ENCODE measurements at regions of chr2 and their contacts with region 1.

Region 1: GRCh38 chr2:148989882-148990493 is 48.5 kb upstream of the LYPD6B start:
- DNase-seq: no peak
- ATAC-seq: peak; percentile 88
- H3K4me3 ChIP-seq: no peak overlapping the region
- H3K27ac ChIP-seq: no peak overlapping the region
- H3K4me1 ChIP-seq: no peaks in the 10 kb centered on the region
- H3K27me3 ChIP-seq: no peaks in the 10 kb centered on the region

Region 2: GRCh38 chr2:147937744-147938349 is 1052.1 kb before region 1 on chr2:
- intact Hi-C with region 1: loop called (anchors 1 to 5 kb)
- DNase-seq: no peak
- ATAC-seq: no peak
- H3K4me3 ChIP-seq: no peak overlapping the region
- H3K27ac ChIP-seq: no peak overlapping the region
- H3K4me1 ChIP-seq: no peaks in the 10 kb centered on the region
- H3K27me3 ChIP-seq: no peaks in the 10 kb centered on the region

Region 3: GRCh38 chr2:147989809-147990403 is 1000.1 kb before region 1 on chr2:
- intact Hi-C with region 1: loop called in 1 of 2 experiments (anchors 10 kb)
- DNase-seq: no peak
- ATAC-seq: peak; percentile 74
- H3K4me3 ChIP-seq: no peak overlapping the region
- H3K27ac ChIP-seq: no peak overlapping the region
- H3K4me1 ChIP-seq: peaks cover 0 to 2% of the 10 kb centered on the region in 2 donors
- H3K27me3 ChIP-seq: no peaks in the 10 kb centered on the region

Region 4: DNA sequence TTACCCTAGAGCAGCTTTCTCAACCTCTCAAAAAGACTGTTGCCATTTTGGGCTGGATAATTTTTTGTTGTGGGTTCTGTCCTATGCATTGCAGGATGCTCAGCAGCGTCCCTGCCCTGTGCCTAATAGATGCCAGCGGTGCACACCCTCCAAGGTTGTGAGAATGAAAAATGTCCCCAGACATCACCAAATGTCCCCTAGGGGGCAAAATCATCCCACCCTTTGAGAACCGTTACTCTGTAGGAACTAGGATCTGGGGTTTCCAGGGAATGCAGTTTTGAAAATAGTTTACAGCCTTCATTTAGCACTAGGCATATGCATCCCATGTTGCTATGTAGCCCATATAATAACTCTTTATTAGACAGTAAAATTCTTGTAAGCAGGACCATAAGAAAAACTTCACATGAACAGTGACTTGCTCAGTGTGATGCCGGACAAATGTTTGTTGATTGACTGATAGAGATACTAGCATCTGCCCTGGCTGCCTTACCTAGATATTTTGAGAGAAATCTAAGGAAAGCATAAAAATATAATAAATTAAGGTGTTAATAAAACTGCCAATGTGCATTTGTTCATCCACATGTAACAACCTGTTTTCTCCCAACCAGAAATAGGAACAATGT is 424.6 kb before region 1 on chr2:
- intact Hi-C with region 1: loop called (anchors 5 to 10 kb)
- DNase-seq: no peak
- ATAC-seq: no peak
- H3K4me3 ChIP-seq: no peak overlapping the region
- H3K27ac ChIP-seq: no peak overlapping the region
- H3K4me1 ChIP-seq: no peaks in the 10 kb centered on the region
- H3K27me3 ChIP-seq: no peaks in the 10 kb centered on the region

Region 5: DNA sequence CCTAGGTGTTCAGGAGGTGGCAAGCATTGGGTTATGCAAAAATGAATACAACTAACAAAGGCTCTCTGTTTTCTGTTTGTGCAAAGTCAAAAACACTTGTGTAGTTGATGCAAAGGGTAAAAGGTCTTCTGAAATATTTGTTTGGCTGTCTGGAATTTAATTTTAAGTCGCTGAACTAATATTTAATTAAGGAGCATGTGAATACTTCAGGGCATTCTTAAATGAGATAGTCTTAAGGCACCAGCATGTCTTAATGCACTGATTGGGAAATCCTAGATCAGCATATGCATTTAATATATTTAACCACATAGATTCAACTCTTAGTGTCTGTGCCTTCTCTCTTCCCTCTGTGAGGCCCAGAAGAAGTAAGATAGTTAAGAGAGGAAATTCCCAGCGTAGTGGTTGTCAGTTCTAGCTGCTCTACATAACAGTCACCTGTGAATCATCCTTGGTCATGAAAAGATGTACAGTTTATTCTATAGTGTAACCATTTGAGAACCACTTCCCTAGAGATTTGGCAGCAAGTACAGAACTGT is 233.5 kb before region 1 on chr2:
- intact Hi-C with region 1: no loop called
- DNase-seq: no peak
- ATAC-seq: no peak
- H3K4me3 ChIP-seq: no peak overlapping the region
- H3K27ac ChIP-seq: no peak overlapping the region
- H3K4me1 ChIP-seq: no peaks in the 10 kb centered on the region
- H3K27me3 ChIP-seq: no peaks in the 10 kb centered on the region

Region 6: GRCh38 chr2:148853458-148853857 is 136.5 kb before region 1 on chr2:
- intact Hi-C with region 1: no loop called
- DNase-seq: no peak
- ATAC-seq: no peak
- H3K4me3 ChIP-seq: no peak overlapping the region
- H3K27ac ChIP-seq: no peak overlapping the region
- H3K4me1 ChIP-seq: no peaks in the 10 kb centered on the region
- H3K27me3 ChIP-seq: no peaks in the 10 kb centered on the region